OCI-LY7 (cell line): ENCODE measurements at regions of chr19 and their contacts with region 1.

Region 1: DNA sequence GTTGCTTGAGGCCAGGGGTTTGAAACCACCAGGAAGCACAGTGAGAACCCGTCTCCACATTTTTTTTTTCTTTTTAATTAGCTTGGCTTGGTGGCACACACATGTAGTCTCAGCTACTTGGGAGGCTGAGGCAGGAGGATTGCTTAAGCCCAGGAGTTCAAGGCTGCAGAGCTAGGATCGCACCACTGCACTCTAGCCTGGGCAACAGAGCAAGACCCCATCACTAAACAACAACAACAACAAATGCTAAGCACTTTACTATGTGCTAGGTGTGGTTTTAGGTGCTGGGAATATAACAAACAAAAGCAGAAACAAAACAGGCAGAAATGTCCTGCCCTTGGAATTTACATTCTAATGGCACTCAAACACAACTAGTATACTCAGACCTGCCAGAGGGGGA is 51.3 kb downstream of the RYR1 start:
- DNase-seq: no peak
- H3K4me3 ChIP-seq: no peak overlapping the region
- H3K27ac ChIP-seq: no peak overlapping the region
- H3K4me1 ChIP-seq: no peaks in the 10 kb centered on the region
- CTCF ChIP-seq: no peak

Region 2: DNA sequence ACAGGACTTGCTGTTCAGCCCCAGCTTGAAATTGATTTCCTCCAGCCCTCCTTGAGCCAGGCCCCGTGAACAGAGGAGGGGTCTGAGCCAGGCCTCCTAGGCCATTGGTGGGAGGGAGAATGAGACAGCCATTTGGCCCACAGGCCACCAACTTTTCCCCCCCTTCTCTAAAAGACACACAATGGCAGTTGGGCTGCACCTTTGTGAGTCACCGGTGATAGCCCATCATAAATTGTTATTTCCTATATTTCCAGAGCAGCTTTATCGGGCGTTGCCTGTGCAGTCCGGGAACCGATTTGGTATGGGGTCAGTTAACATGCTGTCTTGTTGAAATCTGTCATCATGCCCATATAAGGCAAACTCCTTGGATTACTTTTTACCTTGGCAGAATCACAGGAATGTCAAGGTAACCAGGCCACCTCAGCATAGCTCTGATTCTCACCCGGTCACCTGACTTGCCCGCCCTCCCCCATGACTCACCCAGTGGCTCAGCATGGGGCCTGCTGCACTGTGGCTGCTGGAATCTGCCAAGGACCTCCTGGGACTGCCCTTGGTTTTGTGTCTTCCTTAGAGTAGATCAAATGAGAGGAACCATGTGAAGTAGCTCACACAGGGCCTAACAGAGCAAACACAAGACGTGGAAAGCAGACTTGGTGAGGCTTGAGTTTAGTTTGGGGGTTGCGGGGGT is 198.8 kb after region 1 on chr19:
- CTCF ChIA-PET with region 1: no interaction called
- POLR2A ChIA-PET with region 1: interaction called, 12 read pairs
- intact Hi-C with region 1: no loop called
- DNase-seq: no peak
- H3K4me3 ChIP-seq: no peak overlapping the region
- H3K27ac ChIP-seq: no peak overlapping the region
- H3K4me1 ChIP-seq: peaks cover 12% of the 10 kb centered on the region
- CTCF ChIP-seq: no peak